Mammary epithelial cell (primary cell): ENCODE measurements at regions of chr17 and their contacts with region 1.

Region 1: GRCh38 chr17:75673487-75673886 is 6.3 kb downstream of the SAP30BP start:
- DNase-seq: no peak
- H3K4me3 ChIP-seq: no peak overlapping the region
- H3K27ac ChIP-seq: no peak overlapping the region
- H3K4me1 ChIP-seq: peaks cover 16% of the 10 kb centered on the region
- H3K27me3 ChIP-seq: no peaks in the 10 kb centered on the region
- CTCF ChIP-seq: no peak

Region 2: DNA sequence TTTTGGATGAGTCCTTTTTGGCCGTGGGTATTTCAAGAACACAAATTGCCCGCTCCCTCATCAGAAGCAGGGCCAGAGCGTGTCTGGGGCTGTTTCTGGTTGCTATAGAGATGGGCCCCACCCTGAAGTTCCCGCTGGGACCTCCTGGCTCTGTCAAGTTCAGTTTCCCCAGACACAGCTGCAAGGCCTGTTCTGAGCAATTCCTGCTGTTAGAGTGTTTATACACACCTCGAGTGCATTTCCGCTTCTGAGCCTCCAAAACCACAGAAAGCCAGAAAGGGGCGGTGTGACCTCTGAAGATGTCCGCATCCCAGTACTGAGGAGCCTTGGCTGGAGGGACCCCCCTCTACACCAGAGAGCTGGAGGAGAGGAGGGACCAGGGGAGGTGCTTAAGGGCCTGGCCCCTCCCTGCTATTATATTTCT is 191.0 kb after region 1 on chr17:
- CTCF ChIA-PET with region 1: no interaction called
- dilution Hi-C with region 1: loop called (anchors 5 kb)
- in situ Hi-C with region 1: no loop called
- intact Hi-C with region 1: no loop called
- DNase-seq: no peak
- H3K4me3 ChIP-seq: no peak overlapping the region
- H3K27ac ChIP-seq: no peak overlapping the region
- H3K4me1 ChIP-seq: peaks cover 6% of the 10 kb centered on the region
- H3K27me3 ChIP-seq: no peaks in the 10 kb centered on the region
- CTCF ChIP-seq: no peak